ENCODE measurements at regions of chr9 and their contacts with region 1.

Region 1: GRCh38 chr9:127128341-127129072 is 6.1 kb upstream of the ANGPTL2 start:
- DNase-seq: no peak
- H3K4me3 ChIP-seq: no peak overlapping the region
- H3K27ac ChIP-seq: no peak overlapping the region
- H3K4me1 ChIP-seq: peaks cover 7 to 16% (median 10%) of the 10 kb centered on the region in 4 experiments
- H3K27me3 ChIP-seq: no peaks in the 10 kb centered on the region; a peak in 3 of 7 replicates
- CTCF ChIP-seq: no peak
- EP300 ChIP-seq: no peak
- POLR2A ChIP-seq: no peak
- RAD21 ChIP-seq: no peak

Region 2: DNA sequence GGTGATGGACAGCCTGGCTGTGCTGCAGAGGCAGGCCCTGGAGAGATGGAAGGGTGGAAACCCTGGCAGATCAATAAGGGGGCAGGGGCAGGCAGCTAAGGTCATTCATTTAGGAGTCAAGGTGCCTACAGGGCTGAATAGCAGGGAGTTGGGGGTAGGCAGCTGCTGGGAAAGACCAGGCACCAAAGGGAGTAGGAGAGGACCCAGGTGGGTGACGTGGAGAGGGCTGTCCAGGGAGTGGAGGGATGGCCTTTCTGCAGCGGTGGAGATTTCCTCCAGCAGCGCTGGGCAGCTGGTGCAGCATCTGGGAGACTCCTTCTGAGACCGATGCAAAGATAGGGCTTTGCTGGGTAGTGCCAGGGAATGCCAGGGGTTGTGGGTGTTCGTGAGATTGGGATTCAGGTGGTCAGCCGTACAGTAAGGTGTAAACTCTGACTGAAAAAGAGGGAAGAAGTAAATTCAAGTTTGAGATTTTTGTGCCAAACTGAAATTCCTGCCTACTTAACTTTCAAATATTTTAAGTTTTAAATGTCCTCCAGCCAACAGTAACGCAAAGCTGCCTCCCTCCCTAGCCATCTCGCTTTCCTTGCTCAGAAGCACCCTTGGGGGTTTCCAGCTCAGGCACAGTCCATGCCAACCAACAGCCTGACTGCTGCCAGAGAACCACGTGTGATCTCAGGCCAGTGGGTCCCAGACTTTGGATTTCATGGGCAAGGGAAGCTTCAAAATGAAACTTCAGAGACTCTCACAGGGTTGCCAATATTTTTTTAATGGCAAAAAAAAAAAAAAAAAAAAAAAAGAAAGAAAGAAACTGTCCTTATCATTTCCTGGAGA is 12.6 kb after region 1 on chr9:
- CTCF ChIA-PET with region 1: interaction called, 4 read pairs
- POLR2A ChIA-PET with region 1: interaction called, 10 read pairs
- DNase-seq: peak in 1 of 2 experiments; percentile 39
- H3K4me3 ChIP-seq: no peak overlapping the region
- H3K27ac ChIP-seq: no peak overlapping the region
- H3K4me1 ChIP-seq: peaks cover 0 to 8% (median 6%) of the 10 kb centered on the region in 4 experiments; a peak in 5 of 7 replicates
- H3K27me3 ChIP-seq: no peaks in the 10 kb centered on the region
- CTCF ChIP-seq: no peak
- EP300 ChIP-seq: no peak
- POLR2A ChIP-seq: no peak
- RAD21 ChIP-seq: no peak

Measured in H1 (cell line).